ENCODE measurements at regions of chr5 and their contacts with region 1.

Region 1: GRCh38 chr5:178204182-178204894 is at the start of gene HNRNPAB:
- DNase-seq: peak; percentile 93 to 98 (median 95)
- ATAC-seq: peak; percentile 92
- H3K4me3 ChIP-seq: peak within 1 kb of the TSS; percentile 94
- H3K4me3 Mint-ChIP-seq: peak within 1 kb of the TSS; percentile 90 to 100 (median 99)
- H3K27ac ChIP-seq: peak within 1 kb of the TSS; percentile 88
- H3K27ac Mint-ChIP-seq: peak within 1 kb of the TSS; percentile 91 to 100 (median 99)
- H3K4me1 ChIP-seq: peaks cover 11 to 25% of the 10 kb centered on the region in 2 donors
- H3K4me1 Mint-ChIP-seq: peaks cover 26 to 35% (median 33%) of the 10 kb centered on the region in 7 donors
- H3K27me3 ChIP-seq: no peaks in the 10 kb centered on the region
- H3K27me3 Mint-ChIP-seq: peaks cover 0 to 2% (median 0%) of the 10 kb centered on the region in 5 donors
- total RNA-seq, gene HNRNPAB: 68.9 to 197 (median 82.6) TPM

Region 2: DNA sequence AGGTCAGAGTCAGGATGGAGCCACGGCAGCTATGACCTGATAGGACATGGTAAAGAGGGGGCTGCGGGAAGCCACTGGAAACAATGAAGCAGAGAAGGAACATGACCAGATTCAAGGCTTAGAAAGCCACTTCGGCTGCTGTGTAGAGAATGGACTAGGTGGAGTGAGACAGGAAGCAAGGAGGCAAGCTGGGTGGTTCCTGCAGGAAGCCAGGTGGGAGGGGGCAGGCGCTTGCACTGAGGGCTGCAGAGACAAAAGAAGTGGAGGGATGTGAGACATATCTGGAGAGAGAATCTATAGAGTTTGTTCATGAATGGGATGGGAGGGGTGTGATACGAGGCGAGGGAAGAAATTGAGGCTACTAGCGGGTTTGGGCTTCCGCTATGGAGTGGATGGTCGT is 110.0 kb before region 1 on chr5:
- CTCF ChIA-PET with region 1: no interaction called
- POLR2A ChIA-PET with region 1: no interaction called
- intact Hi-C with region 1: no loop called
- DNase-seq: peak in 1 of 9 donors; percentile 22
- ATAC-seq: peak; percentile 27
- H3K4me3 ChIP-seq: peak overlapping the region; percentile 2
- H3K4me3 Mint-ChIP-seq: peak overlapping the region in 9 of 10 donors; percentile 9 to 73 (median 49)
- H3K27ac ChIP-seq: no peak overlapping the region
- H3K27ac Mint-ChIP-seq: peak overlapping the region in 7 of 9 donors; percentile 2 to 82 (median 55)
- H3K4me1 ChIP-seq: peaks cover 0 to 19% of the 10 kb centered on the region in 2 donors
- H3K4me1 Mint-ChIP-seq: peaks cover 8 to 39% (median 26%) of the 10 kb centered on the region in 7 donors
- H3K27me3 ChIP-seq: no peaks in the 10 kb centered on the region
- H3K27me3 Mint-ChIP-seq: peaks cover 0 to 3% (median 0%) of the 10 kb centered on the region in 5 donors

Region 3: DNA sequence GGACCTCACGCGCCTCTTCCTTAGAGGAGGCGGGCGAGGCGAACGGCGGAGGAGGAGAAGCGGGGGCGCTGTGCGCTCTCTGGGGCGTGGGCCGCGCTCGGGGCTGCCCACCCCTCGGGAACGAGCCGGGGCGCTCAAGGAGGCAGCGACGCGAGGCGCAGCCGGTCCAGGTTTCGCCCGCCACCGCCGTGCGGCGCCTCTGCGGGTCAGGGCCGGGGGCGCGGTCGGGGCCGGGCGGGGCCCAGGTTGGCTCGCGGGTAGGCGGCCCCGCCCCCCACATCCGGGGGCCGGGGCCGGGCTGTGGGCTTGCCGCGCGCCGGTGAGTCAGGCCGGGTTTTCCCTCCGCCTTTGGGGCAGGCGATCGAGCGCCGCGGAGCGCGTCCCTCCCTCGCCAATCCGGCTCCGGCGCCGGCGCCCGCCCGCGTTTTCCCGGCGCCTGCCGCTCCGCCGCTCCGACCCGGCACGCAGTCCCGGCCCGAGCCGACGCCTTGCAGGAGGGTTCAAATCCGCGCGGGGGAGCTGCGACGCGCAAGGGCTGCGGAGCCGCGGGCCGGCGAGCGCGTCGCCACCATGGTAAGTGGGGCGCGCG is 91.0 kb before region 1 on chr5 and contains the start of gene N4BP3:
- CTCF ChIA-PET with region 1: no interaction called
- POLR2A ChIA-PET with region 1: no interaction called
- intact Hi-C with region 1: loop called in 1 of 2 experiments (anchors 2 kb)
- DNase-seq: peak; percentile 31 to 89 (median 56)
- ATAC-seq: peak; percentile 73
- H3K4me3 ChIP-seq: peak within 1 kb of the TSS; percentile 50
- H3K4me3 Mint-ChIP-seq: peak within 1 kb of the TSS; percentile 82 to 96 (median 87)
- H3K27ac ChIP-seq: no peak within 1 kb of the TSS
- H3K27ac Mint-ChIP-seq: peak within 1 kb of the TSS in 6 of 9 donors; percentile 10 to 81 (median 68)
- H3K4me1 ChIP-seq: peaks cover 38 to 43% of the 10 kb centered on the region in 2 donors
- H3K4me1 Mint-ChIP-seq: peaks cover 20 to 43% (median 34%) of the 10 kb centered on the region in 7 donors
- H3K27me3 ChIP-seq: no peaks in the 10 kb centered on the region
- H3K27me3 Mint-ChIP-seq: peaks cover 0 to 46% (median 8%) of the 10 kb centered on the region in 5 donors
- total RNA-seq, gene N4BP3: 0.79 to 3.5 (median 2.1) TPM

Region 4: DNA sequence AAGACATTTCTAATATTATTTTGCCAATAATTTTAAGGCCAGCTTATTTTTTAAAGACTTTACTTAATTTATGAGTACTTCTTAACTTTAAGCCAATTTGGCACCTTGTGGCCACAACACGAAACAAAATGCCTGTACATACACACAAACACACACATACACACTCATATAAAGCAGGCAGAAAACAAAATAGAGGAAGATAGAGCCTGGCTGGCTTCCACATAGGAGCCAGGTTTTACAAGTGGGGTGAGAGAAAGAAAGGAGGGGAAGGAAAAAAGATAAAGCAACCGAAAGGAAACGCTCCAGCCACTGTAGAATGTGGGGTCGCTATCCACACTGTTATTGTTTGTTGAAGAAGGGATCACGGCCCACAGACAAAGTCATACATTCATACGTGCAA is 27.5 kb before region 1 on chr5:
- CTCF ChIA-PET with region 1: no interaction called
- POLR2A ChIA-PET with region 1: no interaction called
- intact Hi-C with region 1: no loop called
- DNase-seq: no peak
- ATAC-seq: no peak
- H3K4me3 ChIP-seq: no peak overlapping the region
- H3K4me3 Mint-ChIP-seq: no peak overlapping the region
- H3K27ac ChIP-seq: no peak overlapping the region
- H3K27ac Mint-ChIP-seq: no peak overlapping the region
- H3K4me1 ChIP-seq: no peaks in the 10 kb centered on the region
- H3K4me1 Mint-ChIP-seq: peaks cover 0 to 4% (median under 1%) of the 10 kb centered on the region in 7 donors
- H3K27me3 ChIP-seq: no peaks in the 10 kb centered on the region
- H3K27me3 Mint-ChIP-seq: peaks cover 0 to 10% (median 0%) of the 10 kb centered on the region in 5 donors

Region 5: DNA sequence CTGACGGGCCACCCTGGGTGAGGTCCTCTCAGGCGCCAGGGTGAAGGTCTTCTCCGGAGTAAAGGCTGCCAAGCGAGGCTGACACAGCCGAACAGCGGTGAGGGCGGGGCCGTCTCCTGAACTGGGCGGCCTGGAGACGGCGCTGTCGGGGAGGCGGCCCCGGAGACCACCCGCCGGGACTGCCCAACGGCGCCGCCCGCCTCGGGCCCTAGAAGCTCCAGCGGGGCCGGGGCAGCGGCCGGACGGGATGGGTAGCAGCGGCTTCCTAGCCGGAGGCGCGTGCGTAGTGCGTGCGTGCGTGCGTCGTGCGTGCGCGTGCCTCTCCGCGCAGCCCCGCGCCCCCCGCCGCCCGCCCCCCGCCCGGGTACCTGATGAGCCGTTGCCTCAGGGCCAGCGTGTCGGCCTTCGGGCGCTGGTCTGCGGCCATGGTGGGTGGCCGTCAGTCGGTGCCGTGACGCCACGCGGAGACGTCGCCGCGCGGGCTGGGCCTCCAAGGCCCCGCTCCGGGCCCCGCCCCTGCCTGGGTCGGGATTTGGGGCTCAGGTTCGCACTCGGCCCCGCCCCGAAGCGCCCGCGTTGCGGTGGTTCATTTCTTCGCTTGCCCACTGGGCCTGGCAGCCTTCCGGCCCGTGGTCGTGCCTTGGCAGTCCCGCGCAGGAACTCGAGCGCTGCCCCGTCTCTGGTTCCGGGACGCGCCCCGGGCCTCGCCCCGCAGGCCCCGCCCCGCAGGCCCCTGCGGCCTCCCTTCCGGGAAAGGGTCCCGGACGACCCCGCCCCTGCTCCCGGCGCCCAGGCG is 28.0 kb after region 1 on chr5 and contains the start of gene PHYKPL:
- CTCF ChIA-PET with region 1: interaction called, 4 read pairs
- POLR2A ChIA-PET with region 1: interaction called, 16 read pairs
- intact Hi-C with region 1: loop called (anchors 1 kb)
- DNase-seq: peak; percentile 48 to 78 (median 63)
- ATAC-seq: peak; percentile 81
- H3K4me3 ChIP-seq: peak within 1 kb of the TSS; percentile 63
- H3K4me3 Mint-ChIP-seq: peak within 1 kb of the TSS; percentile 75 to 90 (median 84)
- H3K27ac ChIP-seq: peak within 1 kb of the TSS; percentile 95
- H3K27ac Mint-ChIP-seq: peak within 1 kb of the TSS; percentile 75 to 92 (median 86)
- H3K4me1 ChIP-seq: peaks cover 29 to 38% of the 10 kb centered on the region in 2 donors
- H3K4me1 Mint-ChIP-seq: peaks cover 38 to 73% (median 58%) of the 10 kb centered on the region in 7 donors
- H3K27me3 ChIP-seq: no peaks in the 10 kb centered on the region
- H3K27me3 Mint-ChIP-seq: no peaks in the 10 kb centered on the region
- total RNA-seq, gene PHYKPL: 107 to 265 (median 176) TPM

Region 6: DNA sequence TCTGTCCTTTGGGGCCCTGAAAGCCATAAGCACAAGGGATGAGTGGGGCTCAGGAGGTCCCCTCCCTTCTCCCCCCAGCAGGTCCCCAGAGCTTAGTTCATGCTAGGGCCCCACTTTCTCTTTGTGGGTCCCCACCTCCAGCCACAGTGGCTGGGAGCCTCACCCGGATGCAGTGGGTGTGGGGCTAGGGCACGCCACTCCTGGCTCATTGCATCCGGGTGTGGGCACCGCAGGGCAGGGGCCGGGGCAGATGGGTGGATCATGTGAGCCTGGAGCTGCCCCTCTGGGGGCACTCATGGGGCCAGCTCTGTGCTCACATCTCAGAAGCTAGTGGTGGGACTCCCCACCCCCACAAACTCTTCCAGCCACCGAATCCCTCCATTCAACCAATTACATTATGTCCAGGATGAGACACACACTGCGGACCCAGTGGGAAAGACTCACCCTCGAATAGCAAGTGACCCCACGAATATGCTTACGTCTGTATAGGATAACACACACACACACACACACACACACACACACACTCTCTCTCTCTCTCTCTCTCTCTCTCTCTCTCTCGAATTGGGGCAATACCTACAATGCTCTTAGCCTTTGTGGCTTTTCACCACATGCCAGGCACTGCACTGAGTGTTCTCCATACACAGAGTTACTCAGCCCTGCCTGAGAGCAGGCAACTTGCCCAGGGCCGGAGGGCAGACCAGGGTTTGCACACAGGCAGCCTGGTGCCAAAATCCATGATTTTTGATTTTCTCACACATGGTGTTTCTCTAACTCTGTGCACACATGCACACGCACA is 45.1 kb after region 1 on chr5:
- CTCF ChIA-PET with region 1: no interaction called
- POLR2A ChIA-PET with region 1: no interaction called
- intact Hi-C with region 1: no loop called
- DNase-seq: peak in 3 of 9 donors; percentile 31 to 55 (median 37)
- ATAC-seq: peak; percentile 78
- H3K4me3 ChIP-seq: peak overlapping the region; percentile 20
- H3K4me3 Mint-ChIP-seq: peak overlapping the region in 9 of 10 donors; percentile 52 to 75 (median 68)
- H3K27ac ChIP-seq: peak overlapping the region; percentile 14
- H3K27ac Mint-ChIP-seq: peak overlapping the region; percentile 53 to 90 (median 73)
- H3K4me1 ChIP-seq: peaks cover 5 to 10% of the 10 kb centered on the region in 2 donors
- H3K4me1 Mint-ChIP-seq: peaks cover 0 to 15% (median 9%) of the 10 kb centered on the region in 7 donors
- H3K27me3 ChIP-seq: no peaks in the 10 kb centered on the region
- H3K27me3 Mint-ChIP-seq: peaks cover 0 to 2% (median 0%) of the 10 kb centered on the region in 5 donors

Region 7: GRCh38 chr5:178279725-178280438 is 75.5 kb after region 1 on chr5:
- CTCF ChIA-PET with region 1: no interaction called
- POLR2A ChIA-PET with region 1: no interaction called
- intact Hi-C with region 1: no loop called
- DNase-seq: peak in 7 of 9 donors; percentile 28 to 71 (median 40)
- ATAC-seq: peak; percentile 68
- H3K4me3 ChIP-seq: no peak overlapping the region
- H3K4me3 Mint-ChIP-seq: no peak overlapping the region
- H3K27ac ChIP-seq: no peak overlapping the region
- H3K27ac Mint-ChIP-seq: no peak overlapping the region
- H3K4me1 ChIP-seq: peaks cover 0 to 4% of the 10 kb centered on the region in 2 donors
- H3K4me1 Mint-ChIP-seq: peaks cover 0 to 6% (median 4%) of the 10 kb centered on the region in 7 donors
- H3K27me3 ChIP-seq: no peaks in the 10 kb centered on the region
- H3K27me3 Mint-ChIP-seq: peaks cover 2 to 9% (median 7%) of the 10 kb centered on the region in 5 donors

Region 8: DNA sequence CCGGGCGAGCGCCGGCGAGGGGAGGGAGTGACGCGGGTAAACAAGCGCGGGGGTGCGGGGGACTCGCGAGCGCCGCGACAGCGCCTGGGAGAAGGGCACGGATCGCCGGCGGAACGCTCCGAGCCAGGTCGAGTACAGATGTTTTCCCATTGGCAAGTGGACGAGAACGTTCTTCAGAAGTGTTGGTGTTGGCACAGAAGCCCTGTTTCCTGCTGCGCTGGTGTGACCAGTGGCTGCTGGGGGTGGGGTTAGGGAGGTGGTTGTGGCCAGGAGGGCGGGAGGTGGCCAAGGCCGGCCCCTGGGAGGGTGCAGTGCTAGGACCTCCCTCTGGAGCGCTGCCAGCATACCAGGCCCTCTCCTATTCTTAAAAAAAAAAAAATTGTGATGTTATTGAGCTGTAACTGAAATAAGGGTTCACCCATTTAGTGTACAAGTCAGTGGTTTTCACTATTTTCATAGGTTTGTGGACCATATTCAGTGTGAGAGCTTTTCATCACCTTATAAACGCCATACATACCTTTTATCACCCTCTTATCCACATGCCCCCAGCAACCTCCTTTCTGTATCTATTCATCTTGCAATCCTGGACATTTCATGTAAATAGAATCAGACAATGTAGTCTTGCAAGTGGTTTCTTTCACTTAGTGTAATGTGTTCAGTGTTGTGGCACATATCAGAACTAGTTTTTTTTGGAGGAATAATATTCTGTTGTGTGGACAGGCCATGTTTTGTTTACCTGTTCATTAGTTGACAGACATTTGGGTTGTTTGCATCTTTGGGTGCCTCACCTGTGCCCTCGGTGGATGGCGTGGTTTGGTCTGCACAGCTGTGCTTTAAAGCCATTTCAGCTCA is 1617.5 kb after region 1 on chr5:
- CTCF ChIA-PET with region 1: no interaction called
- POLR2A ChIA-PET with region 1: no interaction called
- intact Hi-C with region 1: loop called in 1 of 2 experiments (anchors 10 kb)
- DNase-seq: peak; percentile 72 to 88 (median 85)
- ATAC-seq: peak; percentile 73
- H3K4me3 ChIP-seq: peak overlapping the region; percentile 87
- H3K4me3 Mint-ChIP-seq: peak overlapping the region; percentile 88 to 98 (median 95)
- H3K27ac ChIP-seq: peak overlapping the region; percentile 96
- H3K27ac Mint-ChIP-seq: peak overlapping the region; percentile 79 to 97 (median 94)
- H3K4me1 ChIP-seq: peaks cover 31 to 36% of the 10 kb centered on the region in 2 donors
- H3K4me1 Mint-ChIP-seq: peaks cover 30 to 62% (median 45%) of the 10 kb centered on the region in 7 donors
- H3K27me3 ChIP-seq: no peaks in the 10 kb centered on the region
- H3K27me3 Mint-ChIP-seq: no peaks in the 10 kb centered on the region

Measured in naive thymus-derived CD4-positive, alpha-beta T cell (primary cell).